ENCODE measurements at regions of chr1 and their contacts with region 1.

Region 1: GRCh38 chr1:93846211-93846991 is 32.6 kb downstream of the DNTTIP2 start:
- DNase-seq: peak; percentile 83
- H3K4me3 ChIP-seq: peak overlapping the region; percentile 65 to 90 (median 67)
- H3K27ac ChIP-seq: peak overlapping the region; percentile 99
- H3K4me1 ChIP-seq: peaks cover 25% of the 10 kb centered on the region
- H3K27me3 ChIP-seq: no peaks in the 10 kb centered on the region
- CTCF ChIP-seq: peak; percentile 27 to 53
- POLR2A ChIP-seq: peak; percentile 72

Region 2: DNA sequence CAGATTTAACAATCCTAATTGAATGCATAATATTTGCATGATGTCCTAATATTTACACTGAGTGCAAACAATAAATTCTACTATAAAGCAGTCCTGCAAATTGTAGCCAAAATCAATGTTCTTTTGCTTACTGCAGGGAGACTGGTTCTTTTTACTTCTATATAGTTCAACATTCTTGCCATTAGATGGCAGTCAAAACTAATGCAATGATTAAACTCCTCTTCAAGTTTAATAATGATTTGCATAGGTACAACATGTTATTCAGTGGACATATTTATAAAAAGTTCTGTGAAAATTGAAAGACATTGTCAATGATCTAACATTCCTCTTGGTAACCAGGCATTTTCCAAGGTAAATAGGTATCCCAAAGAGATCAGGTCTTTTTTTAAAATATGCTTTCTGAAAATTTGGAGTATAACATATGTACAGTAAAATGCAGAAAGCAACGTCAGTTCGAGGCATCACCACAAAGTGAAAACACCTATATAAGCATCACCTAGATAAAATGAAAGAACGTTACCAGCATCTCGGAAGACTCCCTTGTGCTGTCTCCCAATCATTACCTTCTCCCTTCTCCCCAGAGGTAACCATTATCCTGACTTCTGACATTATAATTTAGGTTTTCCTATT is 408.3 kb before region 1 on chr1:
- CTCF ChIA-PET with region 1: interaction called, 18 read pairs
- POLR2A ChIA-PET with region 1: no interaction called
- dilution Hi-C with region 1: no loop called
- intact Hi-C with region 1: loop called (anchors 1 kb)
- DNase-seq: peak; percentile 69
- H3K4me3 ChIP-seq: no peak overlapping the region
- H3K27ac ChIP-seq: no peak overlapping the region
- H3K4me1 ChIP-seq: no peaks in the 10 kb centered on the region
- H3K27me3 ChIP-seq: peaks cover 0 to 12% of the 10 kb centered on the region in 2 experiments
- CTCF ChIP-seq: peak; percentile 26 to 29
- POLR2A ChIP-seq: no peak

Region 3: GRCh38 chr1:93552741-93553455 is 293.5 kb before region 1 on chr1:
- CTCF ChIA-PET with region 1: interaction called, 10 read pairs
- POLR2A ChIA-PET with region 1: no interaction called
- dilution Hi-C with region 1: no loop called
- intact Hi-C with region 1: loop called (anchors 2 kb)
- DNase-seq: peak; percentile 70
- H3K4me3 ChIP-seq: no peak overlapping the region
- H3K27ac ChIP-seq: peak overlapping the region; percentile 34
- H3K4me1 ChIP-seq: peaks cover 58% of the 10 kb centered on the region
- H3K27me3 ChIP-seq: no peaks in the 10 kb centered on the region
- CTCF ChIP-seq: no peak
- POLR2A ChIP-seq: no peak

Region 4: DNA sequence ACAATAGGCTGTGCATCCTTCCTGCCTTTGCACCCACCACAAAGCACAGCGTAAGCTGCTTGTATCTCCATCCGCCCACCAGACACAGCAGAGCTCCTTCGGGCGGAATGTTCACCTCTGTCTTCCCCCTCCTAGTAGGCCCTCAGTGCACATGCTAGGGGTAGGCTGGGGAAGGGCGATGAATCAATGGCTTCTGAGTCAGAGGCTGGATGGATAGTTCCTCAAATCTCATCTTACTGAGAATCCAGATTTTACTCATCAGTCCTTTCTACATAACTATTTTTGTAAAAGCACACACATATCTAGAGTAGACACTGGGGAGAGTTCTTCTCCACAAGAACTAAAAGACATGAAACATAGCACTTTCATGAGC is 238.6 kb before region 1 on chr1:
- CTCF ChIA-PET with region 1: interaction called, 25 read pairs
- POLR2A ChIA-PET with region 1: no interaction called
- dilution Hi-C with region 1: no loop called
- intact Hi-C with region 1: no loop called
- DNase-seq: no peak
- H3K4me3 ChIP-seq: no peak overlapping the region
- H3K27ac ChIP-seq: no peak overlapping the region
- H3K4me1 ChIP-seq: peaks cover 42% of the 10 kb centered on the region
- H3K27me3 ChIP-seq: no peaks in the 10 kb centered on the region
- CTCF ChIP-seq: no peak
- POLR2A ChIP-seq: no peak

Region 5: GRCh38 chr1:93672069-93672468 is 174.3 kb before region 1 on chr1:
- CTCF ChIA-PET with region 1: interaction called, 26 read pairs
- POLR2A ChIA-PET with region 1: no interaction called
- dilution Hi-C with region 1: no loop called
- intact Hi-C with region 1: no loop called
- DNase-seq: peak; percentile 98
- H3K4me3 ChIP-seq: no peak overlapping the region
- H3K27ac ChIP-seq: peak overlapping the region; percentile 92
- H3K4me1 ChIP-seq: peaks cover 86% of the 10 kb centered on the region
- H3K27me3 ChIP-seq: no peaks in the 10 kb centered on the region
- CTCF ChIP-seq: no peak
- POLR2A ChIP-seq: peak; percentile 51

Region 6: GRCh38 chr1:93692983-93693591 is 153.3 kb before region 1 on chr1:
- CTCF ChIA-PET with region 1: interaction called, 12 read pairs
- POLR2A ChIA-PET with region 1: no interaction called
- dilution Hi-C with region 1: no loop called
- intact Hi-C with region 1: no loop called
- DNase-seq: peak; percentile 77
- H3K4me3 ChIP-seq: no peak overlapping the region
- H3K27ac ChIP-seq: peak overlapping the region; percentile 85
- H3K4me1 ChIP-seq: peaks cover 27% of the 10 kb centered on the region
- H3K27me3 ChIP-seq: no peaks in the 10 kb centered on the region
- CTCF ChIP-seq: no peak
- POLR2A ChIP-seq: no peak

Region 7: GRCh38 chr1:93827633-93828366 is 18.6 kb before region 1 on chr1:
- CTCF ChIA-PET with region 1: interaction called, 40 read pairs
- POLR2A ChIA-PET with region 1: no interaction called
- dilution Hi-C with region 1: no loop called
- intact Hi-C with region 1: no loop called
- DNase-seq: peak; percentile 42
- H3K4me3 ChIP-seq: no peak overlapping the region
- H3K27ac ChIP-seq: no peak overlapping the region
- H3K4me1 ChIP-seq: peaks cover 3% of the 10 kb centered on the region
- H3K27me3 ChIP-seq: no peaks in the 10 kb centered on the region
- CTCF ChIP-seq: no peak
- POLR2A ChIP-seq: no peak

Measured in endothelial cell of umbilical vein (primary cell).